Calu3 (cell line): ENCODE measurements at regions of chr10 and their contacts with region 1.

Region 1: DNA sequence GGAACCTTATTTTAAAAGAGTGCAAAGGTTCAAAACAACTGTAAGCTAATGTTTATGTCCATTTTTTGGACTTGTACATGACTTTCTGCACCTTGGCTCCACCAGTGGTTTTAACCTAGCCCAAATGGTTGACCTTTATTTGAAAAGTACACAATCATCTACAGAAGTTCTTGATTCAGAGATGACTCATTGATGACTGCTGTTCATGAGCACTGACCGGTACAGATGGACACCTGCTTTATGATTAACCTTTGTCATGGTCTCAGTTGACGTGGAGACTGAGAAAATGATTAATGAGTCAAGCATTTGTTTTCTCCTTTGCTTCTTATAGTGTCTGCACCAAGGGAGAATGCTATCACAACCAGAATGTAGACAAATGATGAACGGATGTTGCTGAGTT is 55.7 kb upstream of the PTER start:
- DNase-seq: peak; percentile 38
- H3K4me3 Mint-ChIP-seq: no peak overlapping the region
- H3K27ac Mint-ChIP-seq: peak overlapping the region; percentile 96
- H3K4me1 Mint-ChIP-seq: peaks cover 17% of the 10 kb centered on the region
- H3K27me3 Mint-ChIP-seq: no peaks in the 10 kb centered on the region
- CTCF ChIP-seq: no peak

Region 2: DNA sequence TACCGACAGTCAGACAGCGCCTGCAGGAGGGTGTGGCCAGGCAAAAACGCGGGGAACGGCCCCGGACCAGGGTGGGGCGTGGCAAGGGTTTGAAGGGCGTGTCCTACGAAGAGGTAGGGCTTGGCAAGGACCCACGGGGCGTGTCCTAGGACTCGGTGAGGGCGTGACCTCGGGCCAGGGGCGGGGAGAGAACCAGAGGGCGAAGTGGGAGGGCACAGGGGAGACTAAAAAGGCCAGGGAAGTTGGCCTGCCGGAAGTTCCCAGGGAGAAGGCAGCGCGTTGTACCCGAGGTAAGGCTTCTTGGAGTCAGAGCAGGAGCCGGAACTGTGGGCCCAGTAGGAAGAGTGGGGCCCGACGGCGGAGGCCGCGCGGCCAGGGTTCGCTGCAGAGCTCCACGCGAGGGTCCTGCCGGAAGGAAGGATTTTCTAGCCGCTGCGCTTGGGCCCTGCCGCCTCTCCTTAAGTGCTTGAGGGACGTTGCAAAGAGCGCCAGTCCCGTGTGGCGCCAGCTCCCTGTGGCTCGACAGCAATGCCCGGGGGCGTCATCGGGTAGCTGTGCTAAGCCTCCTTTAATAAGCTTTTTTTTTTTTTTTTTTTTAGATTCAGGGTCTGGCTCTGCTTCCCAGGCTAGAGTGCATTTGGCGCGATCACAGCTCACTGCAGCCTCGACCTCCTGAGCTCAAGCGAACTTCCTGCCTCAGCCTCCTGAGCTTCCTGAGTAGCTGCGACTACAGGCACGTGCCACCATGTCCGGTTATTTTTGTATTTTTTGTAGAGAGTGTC is 55.9 kb after region 1 on chr10 and contains the start of gene PTER:
- CTCF ChIA-PET with region 1: no interaction called
- intact Hi-C with region 1: loop called (anchors 10 kb)
- DNase-seq: peak; percentile 98
- H3K4me3 Mint-ChIP-seq: peak within 1 kb of the TSS; percentile 77
- H3K27ac Mint-ChIP-seq: peak within 1 kb of the TSS; percentile 88
- H3K4me1 Mint-ChIP-seq: peaks cover 21% of the 10 kb centered on the region
- H3K27me3 Mint-ChIP-seq: no peaks in the 10 kb centered on the region
- CTCF ChIP-seq: no peak
- total RNA-seq, gene PTER: 30.1 and 33.1 TPM in 2 replicates

Region 3: DNA sequence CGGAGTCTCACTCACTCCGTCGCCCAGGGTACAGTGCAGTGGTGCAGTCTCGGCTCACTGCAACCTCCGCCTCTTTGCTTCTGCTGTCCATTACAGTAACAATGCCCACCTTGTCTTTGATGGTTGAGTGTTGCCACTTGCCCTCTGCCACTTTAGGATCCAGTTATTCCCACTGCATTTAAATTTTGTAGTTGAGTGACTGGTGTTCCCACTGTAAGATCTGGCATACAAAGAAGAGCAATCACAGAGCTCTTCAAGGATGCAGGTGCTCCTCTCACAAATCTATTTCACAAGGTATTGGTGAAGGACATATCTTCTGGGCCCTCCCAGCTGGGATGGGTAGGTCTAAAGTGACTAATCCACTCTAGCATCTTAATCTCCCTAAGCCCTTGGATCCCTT is 68.4 kb after region 1 on chr10:
- CTCF ChIA-PET with region 1: no interaction called
- intact Hi-C with region 1: no loop called
- DNase-seq: no peak
- H3K4me3 Mint-ChIP-seq: no peak overlapping the region
- H3K27ac Mint-ChIP-seq: no peak overlapping the region
- H3K4me1 Mint-ChIP-seq: no peaks in the 10 kb centered on the region
- H3K27me3 Mint-ChIP-seq: no peaks in the 10 kb centered on the region
- CTCF ChIP-seq: no peak

Region 4: DNA sequence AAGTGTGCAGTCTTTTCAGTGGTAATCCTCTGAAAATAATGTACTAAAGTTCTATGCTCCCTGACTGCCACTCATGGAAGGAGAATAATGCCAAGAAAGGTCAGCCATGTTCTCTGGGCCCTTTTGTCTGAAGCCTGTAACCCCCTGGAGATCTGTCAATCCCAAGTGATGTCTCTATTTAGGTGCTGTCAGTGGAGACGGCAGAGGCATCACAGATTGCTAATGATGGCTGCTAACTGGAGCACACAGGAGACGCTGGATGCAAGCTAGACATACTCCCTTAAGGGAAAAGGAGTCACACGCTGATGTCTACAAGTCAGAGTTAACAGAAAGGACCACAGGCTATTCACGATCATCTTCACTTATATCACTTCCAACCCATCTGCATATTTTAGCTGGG is 317.4 kb after region 1 on chr10:
- CTCF ChIA-PET with region 1: no interaction called
- intact Hi-C with region 1: no loop called
- DNase-seq: no peak
- H3K4me3 Mint-ChIP-seq: no peak overlapping the region
- H3K27ac Mint-ChIP-seq: no peak overlapping the region
- H3K4me1 Mint-ChIP-seq: no peaks in the 10 kb centered on the region
- H3K27me3 Mint-ChIP-seq: no peaks in the 10 kb centered on the region
- CTCF ChIP-seq: no peak